ENCODE measurements at regions of chr1 and their contacts with region 1.

Region 1: GRCh38 chr1:172135076-172135672 is 285.3 kb upstream of the C1orf105 start:
- DNase-seq: peak in 3 of 5 donors; percentile 19 to 32 (median 22)
- H3K4me3 ChIP-seq: no peak overlapping the region
- H3K4me3 Mint-ChIP-seq: no peak overlapping the region
- H3K27ac ChIP-seq: no peak overlapping the region
- H3K27ac Mint-ChIP-seq: no peak overlapping the region
- H3K4me1 ChIP-seq: no peaks in the 10 kb centered on the region
- H3K4me1 Mint-ChIP-seq: peaks cover 0 to 8% (median 5%) of the 10 kb centered on the region in 4 donors
- H3K27me3 ChIP-seq: no peaks in the 10 kb centered on the region
- H3K27me3 Mint-ChIP-seq: no peaks in the 10 kb centered on the region

Region 2: DNA sequence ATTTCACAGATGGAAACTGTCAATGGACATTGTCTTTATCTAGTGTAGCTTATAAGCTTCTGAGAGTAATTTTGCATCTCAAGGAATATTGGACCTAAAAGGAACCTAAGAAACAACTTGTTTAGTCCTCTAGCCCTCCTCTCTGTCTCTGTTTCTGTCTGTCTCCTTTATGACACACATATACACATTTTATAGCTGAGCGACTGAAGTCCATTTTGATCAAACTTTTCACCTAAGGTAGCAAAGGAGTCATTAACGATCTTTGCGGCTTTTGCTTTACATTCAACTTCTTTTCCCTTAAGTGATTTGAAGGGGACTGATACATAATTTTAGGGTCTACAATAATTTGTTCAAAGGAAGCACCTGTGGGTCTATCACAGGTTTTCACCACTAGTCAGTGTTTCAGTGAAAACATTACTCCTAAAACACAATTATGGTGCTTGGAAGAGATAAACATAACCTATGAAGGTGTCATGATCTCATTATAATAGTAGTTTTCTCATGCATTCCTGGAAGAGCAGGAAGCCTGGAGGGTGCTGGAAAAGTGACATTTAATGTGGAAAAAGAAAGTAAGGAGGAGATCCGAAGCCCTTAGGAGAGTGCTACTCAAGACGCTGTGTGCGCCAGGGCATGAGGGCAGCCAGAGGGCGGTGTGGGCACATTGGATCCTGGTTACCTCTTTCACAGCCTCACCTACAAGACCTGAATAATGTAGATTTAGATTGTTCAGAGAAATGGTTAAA is 45.2 kb before region 1 on chr1:
- CTCF ChIA-PET with region 1: interaction called, 4 read pairs
- POLR2A ChIA-PET with region 1: no interaction called
- intact Hi-C with region 1: loop called (anchors 2 kb)
- DNase-seq: peak; percentile 42 to 57 (median 49)
- H3K4me3 ChIP-seq: no peak overlapping the region
- H3K4me3 Mint-ChIP-seq: peak overlapping the region in 1 of 8 donors; percentile 18
- H3K27ac ChIP-seq: no peak overlapping the region
- H3K27ac Mint-ChIP-seq: peak overlapping the region in 1 of 7 donors; percentile 73
- H3K4me1 ChIP-seq: no peaks in the 10 kb centered on the region
- H3K4me1 Mint-ChIP-seq: peaks cover 3 to 6% (median 4%) of the 10 kb centered on the region in 4 donors
- H3K27me3 ChIP-seq: no peaks in the 10 kb centered on the region
- H3K27me3 Mint-ChIP-seq: peaks cover 0 to 2% of the 10 kb centered on the region in 2 donors

Region 3: GRCh38 chr1:172149346-172149745 is 14.2 kb after region 1 on chr1:
- CTCF ChIA-PET with region 1: interaction called, 12 read pairs
- POLR2A ChIA-PET with region 1: no interaction called
- intact Hi-C with region 1: no loop called
- DNase-seq: no peak
- H3K4me3 ChIP-seq: no peak overlapping the region
- H3K4me3 Mint-ChIP-seq: no peak overlapping the region
- H3K27ac ChIP-seq: no peak overlapping the region
- H3K27ac Mint-ChIP-seq: no peak overlapping the region
- H3K4me1 ChIP-seq: peaks cover 3% of the 10 kb centered on the region
- H3K4me1 Mint-ChIP-seq: peaks cover 0 to 9% (median 6%) of the 10 kb centered on the region in 4 donors
- H3K27me3 ChIP-seq: no peaks in the 10 kb centered on the region
- H3K27me3 Mint-ChIP-seq: no peaks in the 10 kb centered on the region

Region 4: GRCh38 chr1:172380441-172381244 is 245.5 kb after region 1 on chr1:
- CTCF ChIA-PET with region 1: no interaction called
- POLR2A ChIA-PET with region 1: no interaction called
- intact Hi-C with region 1: loop called (anchors 5 kb)
- DNase-seq: peak; percentile 53 to 80 (median 72)
- H3K4me3 ChIP-seq: peak overlapping the region in 1 of 2 donors; percentile 22
- H3K4me3 Mint-ChIP-seq: peak overlapping the region; percentile 65 to 91 (median 77)
- H3K27ac ChIP-seq: peak overlapping the region; percentile 54
- H3K27ac Mint-ChIP-seq: peak overlapping the region; percentile 80 to 97 (median 91)
- H3K4me1 ChIP-seq: peaks cover 31% of the 10 kb centered on the region
- H3K4me1 Mint-ChIP-seq: peaks cover 17 to 39% (median 29%) of the 10 kb centered on the region in 4 donors
- H3K27me3 ChIP-seq: no peaks in the 10 kb centered on the region
- H3K27me3 Mint-ChIP-seq: no peaks in the 10 kb centered on the region

Measured in CD4-positive, alpha-beta memory T cell (primary cell).